Colonic mucosa (tissue), 4 donors: ENCODE measurements at regions of chr1 and their contacts with region 1.

Region 1: DNA sequence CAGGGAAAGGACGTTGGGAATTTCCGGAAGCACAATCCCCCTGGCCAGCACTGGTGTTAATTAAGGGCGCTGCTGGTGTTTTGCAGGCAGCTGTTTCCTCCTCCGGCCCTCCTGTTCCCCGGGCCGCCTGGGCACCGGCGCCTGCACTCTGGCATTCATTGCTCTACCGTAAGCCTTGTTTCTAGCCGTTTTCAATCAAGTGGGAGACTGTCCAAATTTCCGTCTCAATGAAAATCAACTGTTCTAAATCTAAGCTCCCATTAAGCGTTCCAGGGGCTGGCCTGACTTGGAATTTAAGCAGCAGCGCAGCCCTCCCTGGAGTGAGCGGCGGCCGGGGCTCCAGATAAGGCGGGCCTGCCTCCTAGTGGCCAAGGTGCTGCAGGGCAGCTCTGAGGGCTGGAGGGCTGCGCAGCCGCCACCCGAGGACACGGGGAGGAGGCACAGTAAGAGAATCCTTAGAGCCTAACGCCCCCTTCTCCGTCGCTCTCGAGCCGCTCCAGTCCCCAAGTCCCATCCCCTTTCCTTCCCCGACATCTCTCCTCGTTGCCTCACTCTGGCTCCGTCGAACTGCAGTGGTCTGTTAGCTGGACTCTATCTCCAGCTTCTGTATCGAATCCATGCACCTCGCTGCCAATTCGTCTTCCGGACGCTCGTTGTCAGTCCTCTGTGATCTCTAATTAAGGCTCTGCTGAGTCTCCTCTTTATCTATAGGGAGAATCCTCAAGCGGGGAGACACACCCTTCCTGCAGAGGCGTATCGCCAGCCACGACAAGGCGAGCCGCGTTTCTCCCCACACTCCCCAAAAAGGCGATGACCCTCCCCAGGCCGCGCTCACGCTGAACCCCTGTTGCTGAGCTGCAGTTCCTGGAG is 57.8 kb upstream of the LRRC8D start:
- DNase-seq: peak; percentile 86
- H3K4me3 ChIP-seq: peak overlapping the region; percentile 28
- H3K27ac ChIP-seq: no peak overlapping the region
- H3K4me1 ChIP-seq: no peaks in the 10 kb centered on the region
- H3K27me3 ChIP-seq: no peaks in the 10 kb centered on the region
- CTCF ChIP-seq: peak; percentile 96

Region 2: DNA sequence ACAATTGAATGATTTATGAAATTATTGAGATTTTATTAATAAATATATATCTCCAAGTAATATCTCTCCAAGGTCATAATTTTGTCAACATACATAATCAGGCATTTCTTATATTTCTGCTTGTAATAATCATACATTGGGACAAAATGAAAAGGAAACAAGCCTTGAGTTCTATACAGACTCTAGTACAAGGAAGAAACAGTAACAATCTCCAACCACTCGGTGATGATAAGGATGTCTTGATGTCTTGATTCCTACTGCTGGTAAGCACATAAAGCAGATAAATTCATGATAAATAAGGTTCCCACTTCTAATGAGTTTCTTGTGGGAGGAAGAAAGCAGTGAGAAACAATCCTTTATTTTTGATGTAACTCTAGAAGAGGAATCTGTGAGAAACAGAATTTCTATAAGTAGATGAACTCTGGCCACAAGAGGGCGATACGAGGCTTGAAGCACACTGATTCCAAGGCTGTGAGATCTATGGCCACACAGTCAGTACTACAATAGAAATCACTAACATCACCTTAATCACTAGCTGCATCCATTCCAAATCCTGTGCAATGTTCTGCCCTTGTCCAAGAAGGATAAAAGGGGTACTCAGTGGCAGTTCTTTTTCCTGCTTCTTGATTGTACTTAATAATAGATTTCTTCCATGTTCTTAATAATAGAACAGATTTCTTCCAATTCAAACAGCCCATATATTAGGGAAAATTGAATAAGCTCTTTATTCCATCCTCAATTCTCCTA is 279.8 kb before region 1 on chr1:
- intact Hi-C with region 1: loop called (anchors 2 kb)
- DNase-seq: peak; percentile 81
- H3K4me3 ChIP-seq: no peak overlapping the region
- H3K27ac ChIP-seq: no peak overlapping the region
- H3K4me1 ChIP-seq: no peaks in the 10 kb centered on the region
- H3K27me3 ChIP-seq: no peaks in the 10 kb centered on the region
- CTCF ChIP-seq: peak; percentile 77

Region 3: GRCh38 chr1:89524369-89525168 is 238.4 kb before region 1 on chr1 and contains the start of gene LRRC8B:
- intact Hi-C with region 1: loop called (anchors 10 kb)
- DNase-seq: peak; percentile 95
- H3K4me3 ChIP-seq: peak within 1 kb of the TSS; percentile 94
- H3K27ac ChIP-seq: peak within 1 kb of the TSS; percentile 98
- H3K4me1 ChIP-seq: peaks cover 4% of the 10 kb centered on the region
- H3K27me3 ChIP-seq: no peaks in the 10 kb centered on the region
- CTCF ChIP-seq: no peak
- total RNA-seq, gene LRRC8B: 14.4 to 15.0 TPM

Region 4: DNA sequence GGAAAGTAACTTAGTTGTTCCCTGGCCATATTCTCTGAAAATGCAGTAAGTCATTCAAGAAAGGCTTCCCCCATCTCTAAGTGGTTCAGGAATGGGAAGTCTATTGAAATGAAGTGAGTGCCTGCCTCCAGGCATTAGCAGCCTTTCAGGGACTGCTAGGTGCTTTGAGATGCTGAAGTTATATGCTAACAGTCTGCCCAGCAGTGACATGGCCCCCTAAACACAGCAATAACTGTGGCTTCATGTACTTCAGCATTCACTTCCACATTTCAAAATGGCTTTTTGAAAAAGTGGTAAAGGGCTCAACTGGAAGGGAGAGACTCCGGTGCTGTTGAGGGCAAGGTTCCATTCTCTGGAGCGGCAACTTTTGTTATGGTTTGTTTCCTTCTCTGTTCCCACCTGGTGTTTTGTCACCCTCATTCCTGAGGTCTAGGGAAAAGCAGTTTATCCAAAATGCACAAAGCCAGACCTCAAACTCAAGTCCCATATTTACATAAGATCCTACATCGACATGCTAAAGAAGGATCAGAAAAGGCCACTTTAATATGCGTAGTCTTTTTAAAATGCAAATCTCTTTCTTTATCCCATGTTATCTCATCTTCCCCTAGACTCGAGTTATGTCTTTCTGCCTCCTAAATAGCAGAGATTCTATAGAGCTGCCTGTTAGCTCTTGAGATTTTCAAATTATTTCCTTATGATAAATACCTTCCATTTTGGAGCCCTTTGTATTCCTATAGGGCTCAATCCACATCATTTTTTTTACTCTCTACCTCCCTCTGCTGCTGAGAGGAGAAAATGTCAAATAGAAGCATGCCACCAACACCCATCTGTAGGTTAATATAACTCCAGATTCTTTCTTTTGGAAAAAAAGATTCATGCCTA is 164.3 kb before region 1 on chr1:
- intact Hi-C with region 1: loop called (anchors 10 kb)
- DNase-seq: no peak
- H3K4me3 ChIP-seq: no peak overlapping the region
- H3K27ac ChIP-seq: no peak overlapping the region
- H3K4me1 ChIP-seq: no peaks in the 10 kb centered on the region
- H3K27me3 ChIP-seq: no peaks in the 10 kb centered on the region
- CTCF ChIP-seq: peak; percentile 70

Region 5: GRCh38 chr1:89632657-89633247 is 130.3 kb before region 1 on chr1 and contains the start of gene LRRC8C:
- intact Hi-C with region 1: loop called (anchors 5 kb)
- DNase-seq: peak; percentile 75
- H3K4me3 ChIP-seq: peak within 1 kb of the TSS; percentile 64
- H3K27ac ChIP-seq: peak within 1 kb of the TSS; percentile 63
- H3K4me1 ChIP-seq: no peaks in the 10 kb centered on the region
- H3K27me3 ChIP-seq: no peaks in the 10 kb centered on the region
- CTCF ChIP-seq: no peak
- total RNA-seq, gene LRRC8C: 1.2 to 3.3 TPM